Gastrocnemius medialis (tissue), 4 donors: ENCODE measurements at regions of chr22 and their contacts with region 1.

Region 1: DNA sequence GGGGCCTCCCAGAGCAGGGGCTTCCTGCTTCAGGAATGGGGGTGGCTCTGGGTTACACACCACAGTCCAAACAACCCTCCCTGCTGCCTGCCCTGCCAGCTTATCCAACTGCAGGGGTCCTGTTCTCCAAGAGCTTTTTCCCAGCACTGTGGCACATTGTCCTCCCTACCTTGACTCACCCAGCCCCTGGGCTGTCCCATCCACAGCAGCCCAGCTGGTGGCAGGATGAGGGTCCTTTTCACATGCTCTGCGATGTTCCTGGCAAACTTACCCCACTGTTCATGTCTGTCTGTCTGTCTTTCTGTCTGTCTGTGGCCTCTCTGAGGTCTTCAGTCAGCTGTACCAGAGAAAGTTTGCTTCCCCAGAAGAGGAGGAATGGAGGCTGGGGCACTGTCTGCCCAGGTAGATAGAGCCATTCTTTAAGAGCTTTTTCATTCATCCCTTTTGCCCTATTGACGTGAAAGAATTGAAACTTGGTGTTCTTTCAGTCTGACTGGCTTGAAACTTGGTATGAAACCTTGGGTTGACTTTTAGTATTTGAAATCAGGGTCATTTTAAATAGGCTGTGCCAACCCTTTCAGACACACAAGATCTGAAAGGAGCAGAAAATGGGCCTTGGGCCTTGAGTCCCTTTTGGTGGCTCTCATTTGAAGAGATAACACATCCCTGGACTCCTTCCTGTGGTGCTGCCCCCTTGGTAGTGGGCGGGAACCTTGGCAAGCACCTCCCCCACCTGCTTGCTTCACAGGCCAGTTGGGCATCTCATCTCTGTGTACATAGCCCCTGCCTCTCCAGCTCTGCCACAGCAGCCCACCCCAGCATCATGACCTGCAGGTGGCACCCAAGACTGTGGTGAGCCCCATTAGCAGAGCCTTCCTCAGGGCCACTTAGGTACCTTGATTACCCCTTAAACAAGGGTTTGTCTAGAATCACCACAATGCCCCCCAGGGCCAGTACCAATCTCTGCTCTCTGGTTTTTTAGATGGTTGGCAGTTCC is 74.6 kb upstream of the SUSD2 start:
- DNase-seq: no peak
- ATAC-seq: no peak
- H3K4me3 ChIP-seq: no peak overlapping the region
- H3K27ac ChIP-seq: peak overlapping the region; percentile 16 to 51 (median 34)
- H3K4me1 ChIP-seq: peaks cover 0 to 16% of the 10 kb centered on the region in 2 donors
- H3K27me3 ChIP-seq: no peaks in the 10 kb centered on the region
- CTCF ChIP-seq: peak in 4 of 5 experiments; percentile 20 to 43 (median 36)
- POLR2A ChIP-seq: no peak

Region 2: DNA sequence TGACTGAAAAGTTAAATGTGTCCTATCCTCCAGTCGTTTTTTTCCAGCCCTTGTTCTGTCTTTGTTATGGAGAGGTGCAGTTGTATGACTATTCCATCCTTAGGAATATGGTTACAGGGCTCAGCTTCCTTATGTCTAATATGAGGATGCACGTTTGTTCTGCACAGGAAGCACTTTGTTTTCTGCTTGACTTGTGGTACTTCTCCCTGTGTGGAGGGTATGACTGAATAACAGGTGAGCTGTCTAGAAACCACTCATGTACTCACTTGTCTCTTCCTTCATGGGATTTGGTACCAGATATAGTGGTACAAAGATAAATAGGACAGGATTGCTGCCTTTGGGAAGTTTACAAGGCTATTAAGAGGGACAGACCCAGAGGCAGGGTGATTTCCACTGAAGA is 78.2 kb before region 1 on chr22:
- in situ Hi-C with region 1: no loop called
- intact Hi-C with region 1: no loop called
- DNase-seq: no peak
- ATAC-seq: no peak
- H3K4me3 ChIP-seq: no peak overlapping the region
- H3K27ac ChIP-seq: no peak overlapping the region
- H3K4me1 ChIP-seq: peaks cover 15 to 27% of the 10 kb centered on the region in 2 donors
- H3K27me3 ChIP-seq: no peaks in the 10 kb centered on the region
- CTCF ChIP-seq: no peak
- POLR2A ChIP-seq: no peak

Region 3: GRCh38 chr22:24175160-24175808 is 68.6 kb after region 1 on chr22:
- in situ Hi-C with region 1: loop called in 1 of 4 experiments (anchors 10 kb)
- intact Hi-C with region 1: loop called (anchors 1 kb)
- DNase-seq: peak; percentile 41 to 70
- ATAC-seq: peak; percentile 64 to 82
- H3K4me3 ChIP-seq: no peak overlapping the region
- H3K27ac ChIP-seq: peak overlapping the region; percentile 3 to 62 (median 30)
- H3K4me1 ChIP-seq: peaks cover 5 to 8% of the 10 kb centered on the region in 2 donors
- H3K27me3 ChIP-seq: no peaks in the 10 kb centered on the region
- CTCF ChIP-seq: peak; percentile 76 to 90 (median 81)
- POLR2A ChIP-seq: no peak

Region 4: GRCh38 chr22:24230911-24231656 is 124.4 kb after region 1 on chr22:
- in situ Hi-C with region 1: loop called in 1 of 4 experiments (anchors 25 kb)
- intact Hi-C with region 1: no loop called
- DNase-seq: no peak
- ATAC-seq: no peak
- H3K4me3 ChIP-seq: no peak overlapping the region
- H3K27ac ChIP-seq: no peak overlapping the region
- H3K4me1 ChIP-seq: no peaks in the 10 kb centered on the region
- H3K27me3 ChIP-seq: no peaks in the 10 kb centered on the region
- CTCF ChIP-seq: peak in 2 of 5 experiments; percentile 7 to 21
- POLR2A ChIP-seq: no peak